ENCODE measurements at regions of chr19 and their contacts with region 1.

Region 1: GRCh38 chr19:3821857-3822364 is 35.7 kb upstream of the MATK start:
- DNase-seq: peak; percentile 8
- H3K4me3 Mint-ChIP-seq: no peak overlapping the region
- H3K27ac Mint-ChIP-seq: no peak overlapping the region
- H3K4me1 Mint-ChIP-seq: no peaks in the 10 kb centered on the region
- H3K27me3 Mint-ChIP-seq: peaks cover 32% of the 10 kb centered on the region
- CTCF ChIP-seq: peak; percentile 94

Region 2: DNA sequence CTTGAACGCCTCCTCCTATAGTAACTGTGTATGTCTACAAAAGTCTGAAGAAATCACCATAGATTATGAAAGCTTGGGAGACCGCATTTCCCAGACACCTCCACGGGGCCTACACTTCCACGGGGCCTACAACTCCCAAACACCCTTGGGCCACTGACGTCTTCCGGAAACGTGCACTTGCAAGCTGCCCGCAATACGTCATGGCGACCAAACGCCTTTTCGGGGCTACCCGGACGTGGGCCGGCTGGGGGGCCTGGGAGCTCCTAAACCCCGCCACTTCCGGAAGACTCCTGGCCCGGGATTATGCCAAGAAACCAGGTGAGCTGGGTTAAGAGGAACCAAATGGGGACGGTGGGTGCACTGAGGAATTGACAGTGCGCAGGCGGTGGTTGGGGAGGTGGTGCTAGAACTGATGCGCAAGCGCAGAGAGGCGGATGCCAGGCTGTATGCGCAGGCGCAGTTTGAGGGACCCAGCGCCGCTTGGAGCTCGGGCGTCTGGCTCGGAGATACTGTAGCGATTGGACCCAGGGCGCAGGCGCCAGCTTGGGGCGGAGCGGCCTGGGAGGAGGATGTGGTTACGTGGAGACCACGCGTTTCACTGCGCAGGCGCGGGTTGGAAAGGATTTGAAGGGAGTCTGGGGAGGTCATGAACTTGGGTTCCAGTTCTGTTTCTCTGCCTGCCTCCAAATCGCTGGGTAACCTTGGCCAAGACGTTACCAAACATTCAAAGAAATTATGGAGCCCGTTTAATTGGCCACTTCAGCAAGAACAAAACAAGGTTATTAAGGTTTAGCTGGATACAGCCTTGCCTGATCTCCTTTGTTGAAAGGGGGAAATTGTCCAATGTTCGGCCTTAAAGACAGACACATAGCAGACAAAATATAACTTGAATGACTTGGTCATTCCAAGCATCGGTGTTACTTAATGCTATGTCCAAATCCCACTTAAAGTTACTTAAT is 59.1 kb before region 1 on chr19 and contains the start of gene MRPL54:
- CTCF ChIA-PET with region 1: no interaction called
- POLR2A ChIA-PET with region 1: no interaction called
- intact Hi-C with region 1: loop called (anchors 10 kb)
- DNase-seq: peak; percentile 100
- H3K4me3 Mint-ChIP-seq: peak within 1 kb of the TSS; percentile 92
- H3K27ac Mint-ChIP-seq: peak within 1 kb of the TSS; percentile 98
- H3K4me1 Mint-ChIP-seq: peaks cover 6% of the 10 kb centered on the region
- H3K27me3 Mint-ChIP-seq: no peaks in the 10 kb centered on the region
- CTCF ChIP-seq: no peak
- total RNA-seq, gene MRPL54: 85.0 and 85.7 TPM in 2 replicates

Region 3: DNA sequence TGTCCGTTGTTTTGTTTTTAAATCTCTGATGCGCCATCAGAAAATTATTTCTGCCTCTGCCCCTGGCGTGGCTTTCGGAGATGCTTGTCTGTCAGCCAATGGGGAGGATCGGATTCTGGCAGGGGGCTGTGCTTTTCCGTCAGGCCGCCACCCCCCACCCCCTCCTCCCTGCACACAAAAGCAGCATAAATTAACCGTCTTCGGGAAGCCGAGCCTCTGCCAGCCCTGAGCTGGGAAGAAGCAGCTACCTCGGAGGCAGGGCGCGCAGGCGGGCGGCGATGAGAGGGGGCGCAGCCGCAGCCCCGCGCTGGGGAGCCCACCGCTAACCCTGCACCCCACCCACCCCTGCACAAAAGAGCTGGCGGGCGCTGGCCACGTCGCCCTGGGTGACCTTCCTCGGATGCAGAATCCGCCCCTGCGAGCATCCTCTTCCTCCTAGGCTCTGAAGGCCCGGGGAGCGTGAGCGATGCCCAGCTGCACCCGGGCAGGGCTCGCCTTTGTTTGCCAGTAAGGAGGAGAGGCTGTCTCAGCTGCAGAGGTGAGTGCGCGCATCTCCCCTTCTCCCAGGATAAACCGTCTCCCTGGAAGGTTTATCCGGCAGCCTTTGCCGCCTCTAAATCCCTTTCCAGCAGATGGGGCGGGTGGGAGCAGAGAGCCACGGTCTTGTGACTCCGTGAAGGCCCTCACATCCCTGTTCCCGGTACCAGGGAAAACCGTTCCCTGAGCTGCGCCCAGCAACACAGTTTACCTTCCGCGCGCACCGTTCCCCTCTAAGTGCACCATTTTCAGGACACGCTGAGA is 58.8 kb after region 1 on chr19 and contains the start of gene ATCAY:
- CTCF ChIA-PET with region 1: no interaction called
- POLR2A ChIA-PET with region 1: no interaction called
- intact Hi-C with region 1: no loop called
- DNase-seq: no peak
- H3K4me3 Mint-ChIP-seq: no peak within 1 kb of the TSS
- H3K27ac Mint-ChIP-seq: no peak within 1 kb of the TSS
- H3K4me1 Mint-ChIP-seq: no peaks in the 10 kb centered on the region
- H3K27me3 Mint-ChIP-seq: peaks cover 24% of the 10 kb centered on the region
- CTCF ChIP-seq: no peak
- total RNA-seq, gene ATCAY: not detected in 2 replicates

Region 4: GRCh38 chr19:3893509-3894179 is 71.7 kb after region 1 on chr19:
- CTCF ChIA-PET with region 1: no interaction called
- POLR2A ChIA-PET with region 1: no interaction called
- intact Hi-C with region 1: no loop called
- DNase-seq: no peak
- H3K4me3 Mint-ChIP-seq: no peak overlapping the region
- H3K27ac Mint-ChIP-seq: no peak overlapping the region
- H3K4me1 Mint-ChIP-seq: no peaks in the 10 kb centered on the region
- H3K27me3 Mint-ChIP-seq: peaks cover 11% of the 10 kb centered on the region
- CTCF ChIP-seq: no peak